ENCODE measurements at regions of chrX and their contacts with region 1.

Region 1: GRCh38 chrX:9486764-9487387 is 22.0 kb downstream of the TBL1X start:
- DNase-seq: no peak
- H3K4me3 ChIP-seq: no peak overlapping the region
- H3K27ac ChIP-seq: no peak overlapping the region
- H3K4me1 ChIP-seq: no peaks in the 10 kb centered on the region
- H3K27me3 ChIP-seq: no peaks in the 10 kb centered on the region
- CTCF ChIP-seq: no peak

Region 2: GRCh38 chrX:7596822-7597221 is 1890.1 kb before region 1 on chrX:
- CTCF ChIA-PET with region 1: no interaction called
- dilution Hi-C with region 1: no loop called
- in situ Hi-C with region 1: no loop called
- intact Hi-C with region 1: no loop called
- DNase-seq: no peak
- H3K4me3 ChIP-seq: no peak overlapping the region
- H3K27ac ChIP-seq: no peak overlapping the region
- H3K4me1 ChIP-seq: no peaks in the 10 kb centered on the region
- H3K27me3 ChIP-seq: no peaks in the 10 kb centered on the region
- CTCF ChIP-seq: no peak

Region 3: DNA sequence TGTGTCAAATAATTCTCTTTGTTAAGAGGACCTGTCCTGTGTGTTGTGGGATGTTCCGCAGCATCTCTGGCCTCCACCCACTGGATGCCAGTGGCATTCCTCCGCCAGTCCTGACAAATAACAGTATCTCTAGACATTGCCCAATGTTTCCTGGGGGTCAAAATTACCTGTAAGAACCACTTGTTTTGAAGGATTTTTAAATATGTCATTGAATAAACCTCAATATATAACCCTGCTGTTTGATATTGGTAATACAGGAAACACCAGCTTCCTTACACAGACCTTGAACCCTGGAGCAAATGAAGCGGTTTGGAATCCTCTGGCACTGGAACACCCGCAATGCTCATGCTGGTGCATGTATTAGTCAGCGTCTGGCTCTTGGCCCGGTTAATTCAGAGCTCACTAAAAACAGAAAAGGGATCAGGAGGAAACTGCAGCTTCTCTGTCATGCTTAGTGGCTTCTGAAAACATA is 79.3 kb after region 1 on chrX:
- CTCF ChIA-PET with region 1: no interaction called
- dilution Hi-C with region 1: loop called (anchors 5 kb)
- in situ Hi-C with region 1: no loop called
- intact Hi-C with region 1: no loop called
- DNase-seq: peak; percentile 54
- H3K4me3 ChIP-seq: no peak overlapping the region
- H3K27ac ChIP-seq: no peak overlapping the region
- H3K4me1 ChIP-seq: no peaks in the 10 kb centered on the region
- H3K27me3 ChIP-seq: no peaks in the 10 kb centered on the region
- CTCF ChIP-seq: peak in 1 of 2 donors; percentile 7